A549 (cell line): ENCODE measurements at regions of chr17 and their contacts with region 1.

Region 1: GRCh38 chr17:41665566-41666236 is 23.0 kb upstream of the EIF1 start:
- DNase-seq: peak; percentile 89 to 100
- ATAC-seq: peak; percentile 72 to 91
- H3K4me3 ChIP-seq: peak overlapping the region; percentile 47
- H3K27ac ChIP-seq: peak overlapping the region; percentile 86 to 92
- H3K4me1 ChIP-seq: peaks cover 23% of the 10 kb centered on the region
- CTCF ChIP-seq: peak; percentile 98
- EP300 ChIP-seq: no peak
- POLR2A ChIP-seq: peak; percentile 74
- RAD21 ChIP-seq: peak in 1 of 2 experiments; percentile 46; a peak in 2 of 5 replicates

Region 2: DNA sequence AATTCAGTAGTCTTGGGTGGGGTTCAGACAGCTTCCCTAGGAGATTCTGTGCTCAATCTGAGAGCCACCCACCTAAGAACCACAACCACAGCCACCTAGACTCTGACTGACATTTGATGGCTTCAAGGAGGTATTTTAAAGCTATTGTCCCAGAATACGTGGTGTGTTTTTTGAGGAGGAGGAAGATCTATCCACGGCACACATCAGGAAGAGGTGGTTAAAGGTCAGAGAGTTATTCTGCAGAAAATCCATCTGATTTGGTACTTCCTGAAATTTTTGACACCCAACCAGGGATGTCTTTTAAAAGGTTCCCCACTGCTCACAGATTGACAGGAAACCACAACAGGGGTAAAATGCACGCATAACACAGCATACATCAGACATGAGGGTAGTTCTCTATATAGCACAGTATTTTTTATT is 1043.2 kb before region 1 on chr17:
- CTCF ChIA-PET with region 1: interaction called, 53 read pairs
- POLR2A ChIA-PET with region 1: no interaction called
- DNase-seq: no peak
- ATAC-seq: no peak
- H3K4me3 ChIP-seq: no peak overlapping the region
- H3K27ac ChIP-seq: no peak overlapping the region
- H3K4me1 ChIP-seq: 0 out of 3 replicates have a peak, but pooled peaks cover 3% of the 10 kb centered on the region
- CTCF ChIP-seq: no peak
- EP300 ChIP-seq: no peak
- POLR2A ChIP-seq: no peak
- RAD21 ChIP-seq: no peak

Region 3: GRCh38 chr17:40827746-40828453 is 837.8 kb before region 1 on chr17:
- CTCF ChIA-PET with region 1: interaction called, 12 read pairs
- POLR2A ChIA-PET with region 1: no interaction called
- DNase-seq: peak in 1 of 2 experiments; percentile 36
- ATAC-seq: peak; percentile 64 to 67; a peak in 5 of 6 replicates
- H3K4me3 ChIP-seq: no peak overlapping the region
- H3K27ac ChIP-seq: no peak overlapping the region
- H3K4me1 ChIP-seq: peaks cover 11% of the 10 kb centered on the region
- CTCF ChIP-seq: no peak
- EP300 ChIP-seq: no peak
- POLR2A ChIP-seq: no peak
- RAD21 ChIP-seq: no peak

Region 4: GRCh38 chr17:40903129-40904065 is 762.3 kb before region 1 on chr17:
- CTCF ChIA-PET with region 1: interaction called, 164 read pairs
- POLR2A ChIA-PET with region 1: interaction called, 3 read pairs
- DNase-seq: peak; percentile 94 to 96
- ATAC-seq: peak; percentile 86 to 91
- H3K4me3 ChIP-seq: peak overlapping the region; percentile 33
- H3K27ac ChIP-seq: peak overlapping the region; percentile 91 to 93
- H3K4me1 ChIP-seq: peaks cover 34% of the 10 kb centered on the region
- CTCF ChIP-seq: no peak
- EP300 ChIP-seq: peak; percentile 71 to 74; a peak in 4 of 5 replicates
- POLR2A ChIP-seq: no peak
- RAD21 ChIP-seq: peak; percentile 2 to 29; a peak in 1 of 5 replicates

Region 5: GRCh38 chr17:41480136-41480535 is 185.6 kb before region 1 on chr17:
- CTCF ChIA-PET with region 1: interaction called, 13 read pairs
- POLR2A ChIA-PET with region 1: no interaction called
- DNase-seq: no peak
- ATAC-seq: no peak
- H3K4me3 ChIP-seq: no peak overlapping the region
- H3K27ac ChIP-seq: no peak overlapping the region
- H3K4me1 ChIP-seq: no peaks in the 10 kb centered on the region
- CTCF ChIP-seq: no peak
- EP300 ChIP-seq: no peak
- POLR2A ChIP-seq: no peak
- RAD21 ChIP-seq: no peak

Region 6: DNA sequence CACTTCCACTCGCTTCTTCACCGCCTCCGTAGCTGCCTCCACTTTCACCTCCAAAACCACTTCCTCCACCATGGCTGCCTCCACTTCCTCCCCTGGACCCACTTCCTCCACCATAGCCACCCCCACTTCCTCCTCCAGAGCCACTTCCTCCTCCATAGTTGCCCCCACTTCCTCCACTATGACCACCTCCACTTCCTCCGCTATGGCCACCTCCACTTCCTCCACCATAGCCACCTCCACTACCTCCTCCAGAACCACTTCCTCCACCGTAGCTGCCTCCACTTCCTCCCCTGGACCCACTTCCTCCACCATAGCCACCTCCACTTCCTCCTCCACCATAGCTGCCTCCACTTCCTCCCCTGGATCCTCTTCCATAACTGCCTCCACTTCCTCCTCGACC is 98.4 kb before region 1 on chr17:
- CTCF ChIA-PET with region 1: interaction called, 35 read pairs
- POLR2A ChIA-PET with region 1: no interaction called
- DNase-seq: no peak
- ATAC-seq: no peak
- H3K4me3 ChIP-seq: no peak overlapping the region
- H3K27ac ChIP-seq: no peak overlapping the region
- H3K4me1 ChIP-seq: no peaks in the 10 kb centered on the region
- CTCF ChIP-seq: no peak
- EP300 ChIP-seq: no peak
- POLR2A ChIP-seq: no peak
- RAD21 ChIP-seq: no peak

Region 7: GRCh38 chr17:41678907-41679739 is 13.4 kb after region 1 on chr17:
- CTCF ChIA-PET with region 1: interaction called, 329 read pairs
- POLR2A ChIA-PET with region 1: interaction called, 11 read pairs
- DNase-seq: peak in 1 of 2 experiments; percentile 80
- ATAC-seq: peak; percentile 35 to 47
- H3K4me3 ChIP-seq: peak overlapping the region; percentile 3; the same call in 1 of the 3 replicates
- H3K27ac ChIP-seq: peak overlapping the region; percentile 73 to 83
- H3K4me1 ChIP-seq: peaks cover 48% of the 10 kb centered on the region
- CTCF ChIP-seq: peak; percentile 42
- EP300 ChIP-seq: no peak
- POLR2A ChIP-seq: no peak
- RAD21 ChIP-seq: peak in 1 of 2 experiments; percentile 38; a peak in 3 of 5 replicates

Region 8: DNA sequence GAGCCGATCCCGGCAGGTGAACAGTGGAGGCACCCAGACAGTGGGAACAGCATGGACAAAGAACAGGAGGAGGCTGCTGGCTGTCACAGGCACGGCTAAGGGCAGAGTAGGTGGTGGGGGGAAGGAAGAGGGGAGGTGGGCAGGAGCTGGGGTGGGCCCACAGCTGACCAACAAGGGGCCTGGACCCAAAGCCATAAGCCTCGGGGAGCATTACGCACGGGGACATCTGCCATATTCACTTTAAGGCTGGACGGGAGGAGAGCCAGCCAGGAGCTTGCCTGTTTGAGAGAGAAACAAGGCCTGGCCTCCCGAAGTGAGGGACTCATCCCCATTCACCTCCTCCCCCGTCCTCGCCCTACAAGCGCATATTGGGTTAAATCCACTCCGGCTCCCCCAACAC is 88.4 kb after region 1 on chr17:
- CTCF ChIA-PET with region 1: no interaction called
- POLR2A ChIA-PET with region 1: no interaction called
- DNase-seq: no peak
- ATAC-seq: no peak
- H3K4me3 ChIP-seq: no peak overlapping the region
- H3K27ac ChIP-seq: no peak overlapping the region
- H3K4me1 ChIP-seq: no peaks in the 10 kb centered on the region
- CTCF ChIP-seq: no peak
- EP300 ChIP-seq: no peak
- POLR2A ChIP-seq: no peak
- RAD21 ChIP-seq: no peak

Region 9: DNA sequence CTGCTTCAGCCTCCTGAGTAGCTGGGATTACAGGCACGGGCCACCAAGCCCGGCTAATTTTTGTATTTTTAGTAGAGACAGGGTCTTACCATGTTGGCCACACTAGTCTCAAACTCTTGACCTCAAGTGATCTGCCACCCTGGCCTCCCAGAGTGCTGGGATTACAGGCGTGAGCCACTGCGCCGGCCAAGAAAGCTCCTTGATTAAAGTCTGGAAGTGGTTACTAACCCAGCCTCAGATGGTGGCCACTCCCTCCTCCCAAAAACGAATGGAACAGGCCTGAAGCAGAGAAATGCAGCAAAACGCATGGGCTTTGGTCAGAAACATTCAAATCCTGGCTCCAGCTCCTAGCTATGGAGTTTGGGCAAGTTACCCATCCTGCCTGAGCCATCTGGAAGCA is 158.4 kb after region 1 on chr17:
- CTCF ChIA-PET with region 1: no interaction called
- POLR2A ChIA-PET with region 1: no interaction called
- DNase-seq: no peak
- ATAC-seq: no peak; a peak in 1 of 6 replicates
- H3K4me3 ChIP-seq: no peak overlapping the region
- H3K27ac ChIP-seq: no peak overlapping the region
- H3K4me1 ChIP-seq: no peaks in the 10 kb centered on the region
- CTCF ChIP-seq: no peak
- EP300 ChIP-seq: no peak
- POLR2A ChIP-seq: no peak
- RAD21 ChIP-seq: no peak